ENCODE measurements at regions of chr16 and their contacts with region 1.

Region 1: DNA sequence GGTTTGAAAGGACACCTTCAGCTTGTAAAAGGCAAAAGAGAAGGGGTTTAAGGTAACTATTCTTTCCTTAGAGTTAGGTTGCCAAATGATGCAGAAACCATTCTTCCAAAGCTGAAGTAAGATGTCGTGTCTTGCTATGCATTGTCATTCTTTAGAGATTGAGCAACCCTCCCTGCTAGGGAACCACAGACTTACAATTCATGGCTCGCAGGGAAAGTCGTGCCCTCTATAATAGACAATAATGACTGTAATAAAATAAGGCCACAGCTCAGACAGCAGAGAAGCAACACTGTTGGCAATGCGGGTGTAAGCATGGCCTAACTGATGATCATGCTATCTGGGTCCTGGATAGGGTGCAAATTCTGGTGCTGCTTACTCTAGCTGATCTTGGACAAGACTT is 129.6 kb upstream of the CDH13 start:
- H3K4me3 ChIP-seq: no peak overlapping the region
- H3K27ac ChIP-seq: no peak overlapping the region
- H3K4me1 ChIP-seq: no peaks in the 10 kb centered on the region
- CTCF ChIP-seq: no peak

Region 2: DNA sequence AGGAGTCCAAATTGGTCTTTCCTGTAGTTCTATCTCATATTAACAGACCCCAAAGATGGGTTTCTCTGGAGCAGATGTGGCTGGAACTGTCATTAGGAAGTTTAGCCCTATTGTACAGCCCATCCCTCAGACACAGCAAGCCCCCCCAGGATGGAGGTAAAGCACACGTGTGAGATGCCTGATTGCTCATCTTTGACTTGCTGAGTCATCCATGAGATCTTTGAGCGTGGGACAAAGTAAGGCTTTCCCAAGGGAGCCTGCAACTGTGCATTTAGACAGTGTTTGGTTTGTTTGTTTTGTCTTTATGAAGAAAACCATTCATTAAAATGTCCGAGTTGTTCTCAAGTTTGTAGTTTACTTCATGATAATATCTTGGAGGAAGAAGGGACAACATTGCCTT is 15.7 kb before region 1 on chr16:
- CTCF ChIA-PET with region 1: no interaction called
- POLR2A ChIA-PET with region 1: no interaction called
- H3K4me3 ChIP-seq: no peak overlapping the region
- H3K27ac ChIP-seq: no peak overlapping the region
- H3K4me1 ChIP-seq: no peaks in the 10 kb centered on the region
- CTCF ChIP-seq: no peak

Region 3: GRCh38 chr16:83344014-83344413 is 846.9 kb after region 1 on chr16:
- CTCF ChIA-PET with region 1: no interaction called
- POLR2A ChIA-PET with region 1: interaction called, 13 read pairs
- H3K4me3 ChIP-seq: no peak overlapping the region
- H3K27ac ChIP-seq: no peak overlapping the region
- H3K4me1 ChIP-seq: no peaks in the 10 kb centered on the region
- CTCF ChIP-seq: no peak